Spleen (tissue), 13 donors: ENCODE measurements at regions of chr1 and their contacts with region 1.

Region 1: GRCh38 chr1:94801919-94802546 is 18.1 kb upstream of the SLC44A3 start:
- DNase-seq: peak; percentile 82
- H3K4me3 ChIP-seq: peak overlapping the region in 1 of 8 donors; percentile 41
- H3K27ac ChIP-seq: peak overlapping the region; percentile 13 to 75 (median 58)
- H3K4me1 ChIP-seq: peaks cover 13 to 74% (median 30%) of the 10 kb centered on the region in 6 donors
- H3K27me3 ChIP-seq: peaks cover 0 to 7% (median 0%) of the 10 kb centered on the region in 7 donors
- CTCF ChIP-seq: peak in 7 of 11 experiments; percentile 25 to 48 (median 44)
- POLR2A ChIP-seq: no peak

Region 2: GRCh38 chr1:94481473-94481933 is 320.5 kb before region 1 on chr1:
- intact Hi-C with region 1: loop called (anchors 10 kb)
- DNase-seq: no peak
- H3K4me3 ChIP-seq: no peak overlapping the region
- H3K27ac ChIP-seq: no peak overlapping the region
- H3K4me1 ChIP-seq: no peaks in the 10 kb centered on the region
- H3K27me3 ChIP-seq: no peaks in the 10 kb centered on the region
- CTCF ChIP-seq: peak; percentile 34 to 89 (median 79)
- POLR2A ChIP-seq: no peak

Region 3: DNA sequence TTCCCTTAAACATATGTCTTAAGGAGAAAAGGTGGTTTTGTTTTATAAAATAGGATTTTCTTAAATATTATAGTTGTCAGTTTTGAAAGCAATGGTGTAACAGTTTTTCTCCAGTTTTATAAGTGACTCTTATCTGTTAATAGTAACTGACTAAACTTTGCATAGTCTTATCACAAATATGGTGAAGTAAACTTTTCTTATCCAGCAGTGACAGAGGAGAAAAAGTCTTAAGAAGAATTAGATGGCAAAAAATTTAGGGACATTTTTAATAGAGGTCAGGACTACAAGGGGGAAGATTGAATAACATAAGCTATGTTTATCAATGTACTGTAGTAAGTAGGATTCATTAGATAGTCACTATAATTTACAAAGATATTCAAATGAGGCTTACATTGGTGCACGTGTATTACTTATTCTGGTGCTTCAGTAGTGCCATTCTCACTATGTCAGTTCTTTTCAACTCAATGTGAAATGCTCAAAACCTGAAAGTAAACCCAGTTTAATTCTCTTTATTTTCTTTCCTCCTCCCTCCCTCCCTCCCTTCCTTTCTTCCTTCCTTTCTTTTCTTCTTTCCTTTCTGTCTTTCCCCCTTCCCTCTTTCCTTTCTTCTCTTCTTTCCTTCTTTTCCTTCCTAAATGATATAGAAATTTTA is 286.6 kb before region 1 on chr1:
- intact Hi-C with region 1: loop called (anchors 5 kb)
- DNase-seq: no peak
- H3K4me3 ChIP-seq: no peak overlapping the region
- H3K27ac ChIP-seq: no peak overlapping the region
- H3K4me1 ChIP-seq: no peaks in the 10 kb centered on the region
- H3K27me3 ChIP-seq: no peaks in the 10 kb centered on the region
- CTCF ChIP-seq: no peak
- POLR2A ChIP-seq: no peak